Esophagus muscularis mucosa (tissue), 4 donors: ENCODE measurements at regions of chr6 and their contacts with region 1.

Region 1: DNA sequence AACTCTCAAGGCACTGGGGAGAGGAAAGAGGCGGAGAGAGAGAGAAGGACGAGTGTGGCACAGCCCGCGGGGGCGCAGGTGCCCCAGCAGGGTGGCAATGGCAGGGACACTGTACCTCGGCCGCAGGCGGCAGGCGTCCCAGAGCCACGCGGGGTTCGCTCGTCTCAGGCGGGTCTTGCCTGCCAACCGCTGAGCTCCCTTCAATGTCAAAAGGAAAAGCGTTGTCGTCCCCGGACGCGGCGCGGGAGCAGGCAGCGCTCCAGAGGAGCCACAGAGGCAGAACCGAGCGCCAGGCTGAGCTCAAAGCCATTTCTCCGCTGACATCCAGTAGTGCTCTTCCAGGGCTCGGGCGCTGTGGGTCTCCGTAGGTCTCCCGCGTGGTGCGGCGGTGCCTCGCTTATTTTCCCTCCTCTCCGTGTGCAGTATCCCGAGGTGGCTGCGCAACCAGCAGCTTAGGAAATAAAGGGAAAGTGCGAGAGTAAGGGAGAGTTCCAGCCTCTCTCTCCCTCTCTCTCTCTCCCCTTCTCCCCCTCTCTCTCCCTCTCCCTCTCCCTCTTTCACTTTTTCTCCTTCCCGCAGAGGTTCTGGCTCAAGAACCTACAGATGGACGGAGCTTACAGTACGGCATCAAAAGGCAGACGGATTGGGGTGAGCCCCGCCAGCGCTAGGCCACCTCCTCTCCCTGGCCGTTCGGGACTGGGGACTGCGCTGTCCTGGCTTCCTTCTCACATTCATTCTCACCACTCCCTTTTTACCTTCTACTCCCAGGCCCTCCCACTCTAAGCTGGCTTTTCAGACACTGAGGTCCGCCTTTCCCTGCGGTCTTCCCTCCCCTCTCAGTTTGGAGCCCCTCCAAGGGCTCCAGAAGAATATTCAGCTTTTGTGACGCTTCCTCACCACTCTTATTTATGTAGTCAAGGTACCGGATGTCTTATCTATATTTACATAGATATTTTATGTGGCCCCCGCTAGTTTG is at the start of gene LAMA4:
- DNase-seq: peak; percentile 90
- H3K4me3 ChIP-seq: peak within 1 kb of the TSS; percentile 84 to 96 (median 91)
- H3K27ac ChIP-seq: peak within 1 kb of the TSS; percentile 92 to 98 (median 93)
- H3K4me1 ChIP-seq: peaks cover 22 to 36% (median 35%) of the 10 kb centered on the region in 4 donors
- H3K27me3 ChIP-seq: no peaks in the 10 kb centered on the region
- CTCF ChIP-seq: no peak
- EP300 ChIP-seq: no peak
- POLR2A ChIP-seq: peak; percentile 60
- total RNA-seq, gene LAMA4: 261 to 336 (median 303) TPM

Region 2: GRCh38 chr6:112188906-112189305 is 65.2 kb before region 1 on chr6:
- intact Hi-C with region 1: loop called (anchors 5 kb)
- DNase-seq: no peak
- H3K4me3 ChIP-seq: no peak overlapping the region
- H3K27ac ChIP-seq: peak overlapping the region; percentile 64 to 71 (median 68)
- H3K4me1 ChIP-seq: peaks cover 21 to 92% (median 73%) of the 10 kb centered on the region in 4 donors
- H3K27me3 ChIP-seq: no peaks in the 10 kb centered on the region
- CTCF ChIP-seq: no peak
- EP300 ChIP-seq: no peak
- POLR2A ChIP-seq: no peak

Region 3: GRCh38 chr6:112216699-112217551 is 37.2 kb before region 1 on chr6:
- intact Hi-C with region 1: loop called (anchors 5 kb)
- DNase-seq: no peak
- H3K4me3 ChIP-seq: no peak overlapping the region
- H3K27ac ChIP-seq: peak overlapping the region; percentile 85 to 89 (median 87)
- H3K4me1 ChIP-seq: peaks cover 54 to 97% (median 91%) of the 10 kb centered on the region in 4 donors
- H3K27me3 ChIP-seq: no peaks in the 10 kb centered on the region
- CTCF ChIP-seq: no peak
- EP300 ChIP-seq: no peak
- POLR2A ChIP-seq: no peak

Region 4: GRCh38 chr6:112311950-112312547 is 57.9 kb after region 1 on chr6:
- intact Hi-C with region 1: loop called (anchors 5 kb)
- DNase-seq: no peak
- H3K4me3 ChIP-seq: no peak overlapping the region
- H3K27ac ChIP-seq: peak overlapping the region in 2 of 4 donors; percentile 24 to 28
- H3K4me1 ChIP-seq: peaks cover 2 to 38% (median 24%) of the 10 kb centered on the region in 4 donors
- H3K27me3 ChIP-seq: no peaks in the 10 kb centered on the region
- CTCF ChIP-seq: peak; percentile 71 to 79 (median 74)
- EP300 ChIP-seq: no peak
- POLR2A ChIP-seq: no peak

Region 5: DNA sequence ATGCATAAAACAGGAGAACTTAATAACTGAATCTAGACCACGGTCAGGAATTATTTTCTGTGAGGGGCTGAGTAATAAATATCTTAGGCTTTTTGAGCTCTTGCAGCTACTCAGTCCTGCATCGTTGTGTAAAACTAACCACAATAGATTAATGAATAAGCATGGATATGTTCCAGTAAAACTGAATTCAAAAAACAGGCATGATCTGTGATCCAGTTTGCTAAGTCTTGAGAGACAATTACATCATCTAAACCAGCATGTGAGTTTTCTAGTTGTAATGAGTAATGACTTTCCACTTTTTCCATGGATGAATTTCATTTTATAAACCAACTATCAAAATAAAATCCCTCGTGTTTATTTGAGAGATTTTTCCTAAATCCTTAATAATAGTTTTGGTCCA is 429.8 kb after region 1 on chr6:
- intact Hi-C with region 1: no loop called
- DNase-seq: no peak
- H3K4me3 ChIP-seq: no peak overlapping the region
- H3K27ac ChIP-seq: no peak overlapping the region
- H3K4me1 ChIP-seq: peaks cover 0 to 7% (median 2%) of the 10 kb centered on the region in 4 donors
- H3K27me3 ChIP-seq: no peaks in the 10 kb centered on the region
- CTCF ChIP-seq: no peak
- EP300 ChIP-seq: no peak
- POLR2A ChIP-seq: no peak